HCT116 (cell line): ENCODE measurements at regions of chr10 and their contacts with region 1.

Region 1: GRCh38 chr10:112404616-112405015 is 30.7 kb downstream of the ACSL5 start:
- DNase-seq: peak; percentile 74
- ATAC-seq: peak; percentile 82
- H3K4me3 ChIP-seq: peak overlapping the region in 1 of 2 experiments; percentile 13; a peak in 2 of 4 replicates
- H3K27ac ChIP-seq: peak overlapping the region; percentile 90
- H3K4me1 ChIP-seq: peaks cover 44 to 88% of the 10 kb centered on the region in 2 experiments
- H3K27me3 ChIP-seq: no peaks in the 10 kb centered on the region
- CTCF ChIP-seq: no peak
- POLR2A ChIP-seq: no peak
- RAD21 ChIP-seq: no peak

Region 2: DNA sequence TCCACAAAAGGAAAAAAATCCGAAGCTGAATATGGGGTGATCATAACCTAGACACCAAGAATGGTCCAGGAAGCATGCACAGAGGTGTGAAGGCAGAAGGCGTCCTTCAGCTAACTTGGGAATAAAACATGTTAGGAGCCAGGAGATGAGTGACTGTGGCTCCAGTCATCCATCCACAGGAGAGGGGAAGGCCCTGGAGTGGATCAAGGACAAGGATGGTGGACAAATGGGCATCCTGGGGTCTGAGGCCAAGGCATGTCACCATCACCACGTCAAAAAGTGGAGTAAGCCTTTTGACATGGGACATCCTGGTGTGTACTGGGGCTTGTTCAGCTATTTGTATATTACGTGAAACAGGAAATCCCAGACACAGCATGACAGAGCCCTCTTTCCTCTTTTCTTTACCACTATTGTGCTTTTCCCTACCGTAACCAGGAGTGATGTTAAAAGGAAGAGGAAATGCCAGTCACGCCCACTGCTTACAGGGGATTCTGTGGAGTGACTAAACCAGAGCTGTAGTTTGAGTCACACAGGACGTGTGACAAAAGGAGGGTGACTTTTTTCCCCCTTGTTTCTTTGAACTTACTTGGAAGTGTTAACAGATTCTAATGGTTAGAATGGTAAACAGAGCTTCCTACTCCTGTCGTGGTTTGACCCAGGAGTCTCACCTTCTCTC is 15.3 kb before region 1 on chr10:
- CTCF ChIA-PET with region 1: no interaction called
- POLR2A ChIA-PET with region 1: interaction called, 18 read pairs
- RAD21 ChIA-PET with region 1: no interaction called
- intact Hi-C with region 1: no loop called
- DNase-seq: peak; percentile 99
- ATAC-seq: peak; percentile 83
- H3K4me3 ChIP-seq: 0 out of 4 replicates have a peak overlapping the region, but pooled peaks of 1 of the 2 experiments have one; percentile 7
- H3K27ac ChIP-seq: peak overlapping the region; percentile 77
- H3K4me1 ChIP-seq: peaks cover 94 to 97% of the 10 kb centered on the region in 2 experiments
- H3K27me3 ChIP-seq: no peaks in the 10 kb centered on the region
- CTCF ChIP-seq: no peak
- POLR2A ChIP-seq: no peak
- RAD21 ChIP-seq: no peak

Region 3: GRCh38 chr10:112465299-112465883 is 60.8 kb after region 1 on chr10:
- CTCF ChIA-PET with region 1: no interaction called
- POLR2A ChIA-PET with region 1: no interaction called
- RAD21 ChIA-PET with region 1: no interaction called
- intact Hi-C with region 1: no loop called
- DNase-seq: no peak
- ATAC-seq: no peak
- H3K4me3 ChIP-seq: no peak overlapping the region
- H3K27ac ChIP-seq: no peak overlapping the region
- H3K4me1 ChIP-seq: peaks cover 0 to 9% of the 10 kb centered on the region in 2 experiments; a peak in 2 of 4 replicates
- H3K27me3 ChIP-seq: no peaks in the 10 kb centered on the region
- CTCF ChIP-seq: no peak
- POLR2A ChIP-seq: no peak
- RAD21 ChIP-seq: no peak